Caco-2 (cell line): ENCODE measurements at regions of chr17 and their contacts with region 1.

Region 1: GRCh38 chr17:28097901-28098300 is 55.4 kb downstream of the NLK start:
- DNase-seq: no peak
- H3K4me3 ChIP-seq: no peak overlapping the region
- H3K4me3 Mint-ChIP-seq: no peak overlapping the region
- H3K27ac Mint-ChIP-seq: no peak overlapping the region
- H3K4me1 ChIP-seq: peaks cover 16% of the 10 kb centered on the region
- H3K4me1 Mint-ChIP-seq: peaks cover 15% of the 10 kb centered on the region
- H3K27me3 ChIP-seq: no peaks in the 10 kb centered on the region
- H3K27me3 Mint-ChIP-seq: no peaks in the 10 kb centered on the region
- CTCF ChIP-seq: no peak

Region 2: DNA sequence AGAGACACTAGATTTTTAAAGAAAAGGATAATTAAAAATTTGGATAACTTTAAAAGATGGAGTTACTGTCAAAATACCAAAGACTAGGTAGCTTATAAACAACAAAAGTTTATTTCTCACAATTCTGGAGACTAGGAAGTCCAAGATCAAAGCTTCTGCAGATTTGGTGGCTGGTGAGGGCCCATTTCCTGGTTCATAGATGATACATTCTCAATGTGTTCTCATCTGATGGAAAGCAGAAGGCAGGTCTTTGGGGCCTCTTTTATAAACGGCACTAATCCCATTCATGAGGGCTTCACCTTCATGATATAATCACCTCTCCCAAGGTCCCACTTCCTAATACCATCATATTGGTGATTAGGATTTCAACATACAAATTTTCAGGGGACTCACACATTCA is 21.8 kb before region 1 on chr17:
- CTCF ChIA-PET with region 1: no interaction called
- POLR2A ChIA-PET with region 1: no interaction called
- intact Hi-C with region 1: no loop called
- DNase-seq: no peak
- H3K4me3 ChIP-seq: no peak overlapping the region
- H3K4me3 Mint-ChIP-seq: no peak overlapping the region
- H3K27ac Mint-ChIP-seq: no peak overlapping the region
- H3K4me1 ChIP-seq: peaks cover 10% of the 10 kb centered on the region
- H3K4me1 Mint-ChIP-seq: peaks cover 28% of the 10 kb centered on the region
- H3K27me3 ChIP-seq: no peaks in the 10 kb centered on the region
- H3K27me3 Mint-ChIP-seq: no peaks in the 10 kb centered on the region
- CTCF ChIP-seq: no peak

Region 3: DNA sequence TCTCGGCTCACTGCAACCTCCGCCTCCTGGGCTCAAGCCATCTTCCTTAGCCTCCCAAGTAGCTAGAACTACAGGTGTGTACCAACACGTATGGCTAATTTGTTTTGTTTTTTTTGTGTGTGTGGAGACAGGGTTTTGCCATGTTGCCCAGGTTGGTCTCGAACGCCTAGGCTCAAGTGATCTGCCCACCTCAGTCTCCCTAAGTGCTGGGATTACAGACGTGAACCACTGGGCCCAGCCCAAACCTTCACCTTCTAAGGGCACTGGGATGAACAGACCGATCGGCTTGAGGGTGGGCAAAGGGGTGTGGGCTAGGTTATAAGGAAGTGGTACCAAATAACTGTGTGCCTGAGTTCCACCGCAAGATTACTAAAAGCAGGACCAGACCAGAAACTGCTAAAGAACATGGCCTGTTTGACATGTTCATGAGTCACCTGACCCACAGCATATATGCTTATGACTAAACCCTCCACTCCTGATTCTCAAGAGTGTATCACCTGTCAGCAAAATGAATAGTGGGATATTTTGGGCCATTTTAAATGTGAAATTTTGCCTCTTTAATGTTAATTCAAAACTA is 229.2 kb after region 1 on chr17:
- CTCF ChIA-PET with region 1: no interaction called
- POLR2A ChIA-PET with region 1: no interaction called
- intact Hi-C with region 1: loop called (anchors 10 kb)
- DNase-seq: no peak
- H3K4me3 ChIP-seq: no peak overlapping the region
- H3K4me3 Mint-ChIP-seq: no peak overlapping the region
- H3K27ac Mint-ChIP-seq: peak overlapping the region; percentile 48
- H3K4me1 ChIP-seq: peaks cover 52% of the 10 kb centered on the region
- H3K4me1 Mint-ChIP-seq: peaks cover 54% of the 10 kb centered on the region
- H3K27me3 ChIP-seq: no peaks in the 10 kb centered on the region
- H3K27me3 Mint-ChIP-seq: no peaks in the 10 kb centered on the region
- CTCF ChIP-seq: no peak